Heart right ventricle (tissue), 16 donors: ENCODE measurements at regions of chr5 and their contacts with region 1.

Region 1: DNA sequence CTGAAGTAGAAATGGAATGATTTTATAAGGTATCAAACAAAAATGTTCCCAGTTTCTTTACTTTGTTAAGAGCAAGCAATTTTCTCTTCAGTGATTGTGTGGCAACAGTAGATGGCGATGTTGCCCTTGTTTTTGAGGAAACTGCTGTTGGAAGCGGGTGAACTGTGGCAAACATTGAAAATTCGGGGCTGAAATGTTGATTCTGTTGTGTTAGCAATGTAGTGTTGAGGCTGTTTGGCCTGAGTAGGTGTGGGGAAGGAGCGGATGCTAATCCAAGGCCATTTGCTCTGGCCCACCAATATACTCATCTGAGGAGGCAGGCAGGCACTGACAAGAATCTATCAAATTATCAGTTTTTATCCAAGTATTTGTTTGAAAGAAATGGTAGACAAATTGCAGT is 129.8 kb downstream of the SLC12A2 start:
- DNase-seq: peak in 1 of 2 donors; percentile 59
- ATAC-seq: no peak
- H3K4me3 ChIP-seq: no peak overlapping the region
- H3K27ac ChIP-seq: no peak overlapping the region
- H3K4me1 ChIP-seq: peaks cover 0 to 13% (median 6%) of the 10 kb centered on the region in 9 donors
- H3K27me3 ChIP-seq: no peaks in the 10 kb centered on the region
- CTCF ChIP-seq: peak; percentile 49 to 91 (median 76)

Region 2: GRCh38 chr5:128271873-128272446 is 58.6 kb after region 1 on chr5:
- intact Hi-C with region 1: no loop called
- DNase-seq: peak in 1 of 2 donors; percentile 58
- ATAC-seq: peak; percentile 87 to 100 (median 97)
- H3K4me3 ChIP-seq: peak overlapping the region in 8 of 10 donors; percentile 5 to 46 (median 29)
- H3K27ac ChIP-seq: peak overlapping the region in 7 of 10 donors; percentile 25 to 75 (median 54)
- H3K4me1 ChIP-seq: peaks cover 0 to 3% (median 0%) of the 10 kb centered on the region in 9 donors
- H3K27me3 ChIP-seq: no peaks in the 10 kb centered on the region
- CTCF ChIP-seq: no peak

Region 3: GRCh38 chr5:128498844-128499455 is 285.6 kb after region 1 on chr5:
- intact Hi-C with region 1: loop called (anchors 1 to 5 kb)
- DNase-seq: peak in 1 of 2 donors; percentile 17
- ATAC-seq: peak in 2 of 8 donors; percentile 55 to 66
- H3K4me3 ChIP-seq: no peak overlapping the region
- H3K27ac ChIP-seq: no peak overlapping the region
- H3K4me1 ChIP-seq: peaks cover 0 to 7% (median 0%) of the 10 kb centered on the region in 9 donors
- H3K27me3 ChIP-seq: no peaks in the 10 kb centered on the region
- CTCF ChIP-seq: peak; percentile 18 to 72 (median 56)

Region 4: GRCh38 chr5:128667152-128667551 is 453.8 kb after region 1 on chr5:
- intact Hi-C with region 1: loop called in 3 of 10 experiments (anchors 10 kb)
- DNase-seq: no peak
- ATAC-seq: no peak
- H3K4me3 ChIP-seq: no peak overlapping the region
- H3K27ac ChIP-seq: no peak overlapping the region
- H3K4me1 ChIP-seq: no peaks in the 10 kb centered on the region
- H3K27me3 ChIP-seq: no peaks in the 10 kb centered on the region
- CTCF ChIP-seq: peak in 6 of 9 donors; percentile 19 to 51 (median 36)

Region 5: DNA sequence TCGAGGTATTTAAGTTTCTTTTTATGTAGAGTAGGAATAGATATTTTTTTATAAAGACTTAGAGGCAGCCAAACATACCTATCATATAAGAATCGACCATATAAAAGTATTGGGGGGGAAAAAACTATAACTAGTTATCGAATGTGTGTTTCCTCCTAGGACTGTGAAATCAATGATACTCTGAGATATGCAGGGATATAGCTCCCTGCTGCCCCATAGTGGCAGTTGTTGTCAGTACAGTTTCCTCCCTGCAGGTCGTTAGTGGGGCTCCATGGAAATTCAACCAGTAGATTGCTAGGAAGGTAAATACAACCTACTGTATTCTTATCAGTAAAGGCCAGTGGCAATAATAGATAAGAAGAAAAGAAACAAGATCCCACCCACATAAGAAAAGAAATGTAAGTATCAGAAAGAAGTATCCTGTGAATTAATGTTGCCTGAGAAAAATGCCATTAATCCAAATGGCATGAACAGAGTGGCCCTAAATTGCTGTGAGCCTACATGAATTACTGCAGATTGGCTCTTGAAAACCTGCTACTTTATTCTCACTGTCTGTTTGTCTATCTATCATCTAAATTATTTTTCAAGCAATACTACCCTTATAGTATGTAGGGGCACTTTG is 461.6 kb after region 1 on chr5:
- intact Hi-C with region 1: loop called in 3 of 10 experiments (anchors 5 to 10 kb)
- DNase-seq: peak in 1 of 2 donors; percentile 9
- ATAC-seq: no peak
- H3K4me3 ChIP-seq: no peak overlapping the region
- H3K27ac ChIP-seq: no peak overlapping the region
- H3K4me1 ChIP-seq: no peaks in the 10 kb centered on the region
- H3K27me3 ChIP-seq: no peaks in the 10 kb centered on the region
- CTCF ChIP-seq: peak; percentile 9 to 67 (median 45)

Region 6: DNA sequence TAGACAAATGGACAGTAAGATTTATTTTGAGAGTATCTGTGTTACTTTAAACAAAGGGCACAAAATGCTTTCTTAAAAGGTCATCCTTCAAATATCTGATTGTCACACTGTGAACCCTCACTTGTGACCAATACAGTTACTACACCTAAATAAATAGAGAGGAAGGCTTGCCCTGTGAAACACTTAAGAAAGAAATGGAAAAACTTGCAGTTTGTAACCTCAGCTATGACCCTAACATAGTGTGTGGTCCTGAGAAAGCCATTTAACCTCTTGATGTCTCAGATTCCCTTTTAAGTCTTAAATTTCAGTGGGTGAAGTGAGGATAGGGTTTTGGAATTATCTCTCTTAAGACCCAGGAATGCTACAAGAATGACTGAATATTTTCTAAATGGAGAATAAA is 625.3 kb after region 1 on chr5:
- intact Hi-C with region 1: loop called in 6 of 10 experiments (anchors 5 to 10 kb)
- DNase-seq: no peak
- ATAC-seq: no peak
- H3K4me3 ChIP-seq: no peak overlapping the region
- H3K27ac ChIP-seq: no peak overlapping the region
- H3K4me1 ChIP-seq: no peaks in the 10 kb centered on the region
- H3K27me3 ChIP-seq: no peaks in the 10 kb centered on the region
- CTCF ChIP-seq: no peak

Region 7: GRCh38 chr5:128844354-128844923 is 631.1 kb after region 1 on chr5:
- intact Hi-C with region 1: loop called in 9 of 10 experiments (anchors 2 to 10 kb)
- DNase-seq: no peak
- ATAC-seq: no peak
- H3K4me3 ChIP-seq: no peak overlapping the region
- H3K27ac ChIP-seq: no peak overlapping the region
- H3K4me1 ChIP-seq: no peaks in the 10 kb centered on the region
- H3K27me3 ChIP-seq: no peaks in the 10 kb centered on the region
- CTCF ChIP-seq: peak; percentile 14 to 63 (median 46)

Region 8: DNA sequence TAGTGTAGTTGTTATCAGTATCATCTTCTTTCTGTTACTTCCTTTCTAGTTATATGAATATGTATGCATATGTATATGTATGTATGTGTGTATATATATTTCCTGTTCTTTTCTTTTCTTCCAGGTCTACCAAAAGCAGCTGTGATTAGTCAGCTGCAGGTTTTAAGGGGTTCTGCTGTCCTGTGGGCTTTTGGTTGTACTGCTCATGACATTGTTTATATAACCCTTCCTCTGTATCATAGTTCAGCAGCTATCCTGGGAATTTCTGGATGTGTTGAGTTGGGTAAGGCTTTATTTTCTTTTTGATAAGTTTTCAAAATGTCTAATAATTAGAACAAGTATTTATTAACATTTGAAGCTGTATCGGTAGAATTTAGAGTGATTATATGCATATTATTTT is 775.1 kb after region 1 on chr5:
- intact Hi-C with region 1: loop called in 1 of 10 experiments (anchors 5 kb)
- DNase-seq: no peak
- ATAC-seq: no peak
- H3K4me3 ChIP-seq: no peak overlapping the region
- H3K27ac ChIP-seq: no peak overlapping the region
- H3K4me1 ChIP-seq: peaks cover 0 to 10% (median 0%) of the 10 kb centered on the region in 9 donors
- H3K27me3 ChIP-seq: no peaks in the 10 kb centered on the region
- CTCF ChIP-seq: no peak